ENCODE measurements at regions of chr12 and their contacts with region 1.

Region 1: GRCh38 chr12:122021822-122022526 is at the start of gene BCL7A:
- DNase-seq: peak; percentile 33
- H3K4me3 ChIP-seq: peak within 1 kb of the TSS; percentile 62
- H3K27ac ChIP-seq: peak within 1 kb of the TSS; percentile 21
- H3K27me3 ChIP-seq: no peaks in the 10 kb centered on the region
- CTCF ChIP-seq: no peak
- polyA plus RNA-seq, gene BCL7A: 4.4 and 4.6 TPM in 2 replicates

Region 2: DNA sequence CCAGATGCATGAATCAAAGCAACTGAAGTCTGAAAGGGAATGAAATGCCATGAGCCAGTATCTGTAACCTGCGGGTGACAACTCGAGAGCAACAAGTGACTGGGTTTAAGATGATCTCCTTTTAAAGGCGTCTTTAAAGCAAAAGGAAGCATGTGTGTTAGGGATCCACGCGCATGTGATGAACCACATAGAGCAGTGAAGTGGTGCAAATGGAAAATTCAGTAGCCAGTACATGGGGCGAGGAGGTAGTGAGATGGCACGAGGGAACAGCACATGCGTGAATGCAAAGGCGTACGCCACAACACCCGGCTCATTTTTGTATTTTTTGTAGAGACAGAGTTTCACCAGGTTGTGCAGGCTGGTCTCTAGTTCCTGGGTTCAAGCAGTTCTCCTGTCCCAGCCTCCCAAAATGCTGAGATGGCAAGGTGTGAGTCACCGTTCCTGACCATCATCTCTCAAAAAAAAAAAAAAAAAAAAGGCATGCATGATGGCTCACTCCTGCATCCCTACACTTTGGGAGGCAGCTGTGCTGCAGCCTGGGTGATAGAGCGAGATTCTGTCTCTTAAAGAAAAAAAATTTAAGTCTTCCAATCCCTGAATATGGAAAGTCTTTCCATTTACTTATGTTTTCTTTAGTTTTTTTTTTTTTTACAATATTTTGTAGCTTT is 24.9 kb before region 1 on chr12:
- CTCF ChIA-PET with region 1: no interaction called
- POLR2A ChIA-PET with region 1: interaction called, 11 read pairs
- DNase-seq: no peak
- H3K4me3 ChIP-seq: no peak overlapping the region
- H3K27ac ChIP-seq: no peak overlapping the region
- H3K27me3 ChIP-seq: no peaks in the 10 kb centered on the region
- CTCF ChIP-seq: no peak